A549 (cell line): ENCODE measurements at regions of chr11 and their contacts with region 1.

Region 1: DNA sequence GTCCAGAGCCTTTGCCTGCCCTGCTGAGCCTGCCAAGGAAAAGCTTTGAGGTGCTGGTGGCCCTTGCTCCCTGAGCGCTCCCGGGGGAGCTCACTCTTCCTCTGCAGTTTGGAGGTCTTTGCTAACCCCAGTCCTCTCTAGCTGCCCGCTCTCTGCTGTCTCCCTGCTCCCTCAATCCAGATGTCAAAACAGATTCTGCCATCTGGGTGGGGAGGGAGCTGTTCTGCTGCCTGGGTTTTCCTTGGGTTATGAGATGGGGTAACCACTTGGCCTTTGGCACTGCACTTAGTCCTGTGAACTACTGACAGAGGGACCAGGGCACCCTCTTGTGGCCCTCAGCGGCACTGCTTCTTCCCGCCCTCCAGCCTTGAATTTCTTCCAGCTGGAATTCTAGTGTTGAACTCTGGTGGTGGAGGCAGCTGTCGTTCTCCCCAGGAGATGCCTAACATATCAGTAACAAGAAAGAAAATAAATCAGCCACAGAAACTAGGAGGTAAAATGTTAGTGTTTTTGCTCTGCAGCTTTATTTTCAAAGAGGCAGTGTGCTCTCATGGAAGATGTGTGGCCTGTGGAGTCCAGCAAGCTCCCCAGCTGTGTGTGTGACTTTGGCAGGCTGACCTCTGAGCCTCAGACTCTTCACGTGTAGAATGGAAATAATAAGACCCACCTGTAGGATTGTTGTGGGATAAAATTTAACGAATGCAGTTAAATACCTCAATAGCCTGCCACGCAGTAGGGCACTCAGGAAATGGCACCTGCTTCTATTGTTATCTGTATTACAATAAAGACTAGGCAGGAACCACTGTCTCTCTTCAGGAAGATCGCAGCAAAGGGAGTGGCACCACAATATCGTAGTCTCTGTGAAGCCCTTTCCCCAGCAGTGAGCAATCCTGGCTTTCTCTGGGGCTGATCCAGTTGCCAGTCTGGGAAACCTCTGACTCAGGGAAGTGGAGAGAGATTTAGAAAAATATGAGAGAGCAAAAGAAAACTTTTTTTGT is 23.4 kb downstream of the ARFGAP2 start:
- DNase-seq: peak; percentile 77 to 87
- ATAC-seq: peak; percentile 77 to 87
- H3K4me3 ChIP-seq: no peak overlapping the region
- H3K27ac ChIP-seq: no peak overlapping the region
- H3K4me1 ChIP-seq: no peaks in the 10 kb centered on the region
- CTCF ChIP-seq: peak; percentile 91
- EP300 ChIP-seq: no peak
- POLR2A ChIP-seq: no peak
- RAD21 ChIP-seq: peak; percentile 94

Region 2: GRCh38 chr11:46876471-46876870 is 276.8 kb before region 1 on chr11:
- CTCF ChIA-PET with region 1: interaction called, 48 read pairs
- POLR2A ChIA-PET with region 1: no interaction called
- DNase-seq: no peak
- ATAC-seq: no peak
- H3K4me3 ChIP-seq: no peak overlapping the region
- H3K27ac ChIP-seq: no peak overlapping the region
- H3K4me1 ChIP-seq: no peaks in the 10 kb centered on the region
- CTCF ChIP-seq: no peak
- EP300 ChIP-seq: no peak
- POLR2A ChIP-seq: no peak
- RAD21 ChIP-seq: no peak

Region 3: DNA sequence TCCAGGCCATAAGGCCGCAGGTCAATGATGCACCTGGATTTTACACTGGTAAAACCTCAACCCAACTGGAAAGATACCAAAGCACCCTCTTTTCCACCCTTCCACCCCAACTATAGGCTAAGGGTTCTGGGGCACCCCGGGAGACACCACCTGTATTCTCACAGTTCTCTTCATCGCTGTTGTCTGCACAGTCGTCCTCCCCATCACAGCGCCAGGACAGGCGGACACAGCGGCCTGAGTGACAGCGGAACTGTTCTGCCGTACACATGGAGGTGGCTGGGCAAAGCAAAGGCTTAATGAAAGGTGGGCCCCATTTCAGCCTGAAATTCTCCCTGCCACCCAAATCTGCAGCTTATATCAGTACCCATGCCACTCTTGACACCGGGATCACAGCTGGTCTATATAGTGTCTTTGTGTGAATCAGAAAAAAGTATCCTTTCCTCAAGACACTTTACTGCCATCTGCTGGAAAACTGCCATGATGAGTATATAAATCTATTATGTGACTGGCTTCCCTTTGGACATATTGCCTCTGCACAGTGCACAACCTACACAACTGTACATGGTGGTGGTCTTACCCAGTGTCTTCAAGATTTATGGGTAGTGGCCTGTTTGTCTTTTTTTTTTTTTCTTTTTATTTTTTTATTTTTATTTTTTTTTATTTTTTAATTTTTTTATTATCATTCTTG is 256.4 kb before region 1 on chr11:
- CTCF ChIA-PET with region 1: interaction called, 120 read pairs
- POLR2A ChIA-PET with region 1: no interaction called
- DNase-seq: peak; percentile 58 to 68
- ATAC-seq: peak; percentile 69 to 84; a peak in 5 of 6 replicates
- H3K4me3 ChIP-seq: no peak overlapping the region
- H3K27ac ChIP-seq: no peak overlapping the region
- H3K4me1 ChIP-seq: no peaks in the 10 kb centered on the region
- CTCF ChIP-seq: peak; percentile 54
- EP300 ChIP-seq: no peak
- POLR2A ChIP-seq: no peak
- RAD21 ChIP-seq: 0 out of 5 replicates have a peak, but pooled peaks of 1 of the 2 experiments have one; percentile 14

Region 4: GRCh38 chr11:46916286-46917108 is 236.8 kb before region 1 on chr11:
- CTCF ChIA-PET with region 1: interaction called, 103 read pairs
- POLR2A ChIA-PET with region 1: interaction called, 3 read pairs
- DNase-seq: peak; percentile 66 to 94
- ATAC-seq: peak; percentile 69 to 85
- H3K4me3 ChIP-seq: peak overlapping the region; percentile 55
- H3K27ac ChIP-seq: peak overlapping the region; percentile 68 to 85
- H3K4me1 ChIP-seq: peaks cover 21% of the 10 kb centered on the region
- CTCF ChIP-seq: no peak; the same call in 2 of the 3 replicates
- EP300 ChIP-seq: no peak
- POLR2A ChIP-seq: no peak
- RAD21 ChIP-seq: peak in 1 of 2 experiments; percentile 17; a peak in 2 of 5 replicates

Region 5: GRCh38 chr11:47056261-47056915 is 96.9 kb before region 1 on chr11:
- CTCF ChIA-PET with region 1: no interaction called
- POLR2A ChIA-PET with region 1: no interaction called
- DNase-seq: no peak
- ATAC-seq: no peak
- H3K4me3 ChIP-seq: no peak overlapping the region
- H3K27ac ChIP-seq: no peak overlapping the region
- H3K4me1 ChIP-seq: peaks cover 11% of the 10 kb centered on the region
- CTCF ChIP-seq: no peak
- EP300 ChIP-seq: no peak
- POLR2A ChIP-seq: no peak
- RAD21 ChIP-seq: no peak

Region 6: GRCh38 chr11:47130543-47130942 is 22.7 kb before region 1 on chr11:
- CTCF ChIA-PET with region 1: interaction called, 21 read pairs
- POLR2A ChIA-PET with region 1: no interaction called
- DNase-seq: no peak
- ATAC-seq: no peak
- H3K4me3 ChIP-seq: no peak overlapping the region
- H3K27ac ChIP-seq: no peak overlapping the region
- H3K4me1 ChIP-seq: no peaks in the 10 kb centered on the region
- CTCF ChIP-seq: no peak
- EP300 ChIP-seq: no peak
- POLR2A ChIP-seq: no peak
- RAD21 ChIP-seq: no peak